Activated B cell treated with CpG ODN at 0.5 μM for 24 hours (primary cell): ENCODE measurements at regions of chr6 and their contacts with region 1.

Region 1: GRCh38 chr6:151822260-151823111 is 15.0 kb downstream of the ESR1 start:
- DNase-seq: no peak
- ATAC-seq: peak; percentile 95
- H3K4me3 Mint-ChIP-seq: peak overlapping the region; percentile 59
- H3K27ac Mint-ChIP-seq: peak overlapping the region; percentile 8
- H3K4me1 Mint-ChIP-seq: peaks cover 20% of the 10 kb centered on the region
- H3K27me3 Mint-ChIP-seq: no peaks in the 10 kb centered on the region
- CTCF ChIP-seq: no peak

Region 2: DNA sequence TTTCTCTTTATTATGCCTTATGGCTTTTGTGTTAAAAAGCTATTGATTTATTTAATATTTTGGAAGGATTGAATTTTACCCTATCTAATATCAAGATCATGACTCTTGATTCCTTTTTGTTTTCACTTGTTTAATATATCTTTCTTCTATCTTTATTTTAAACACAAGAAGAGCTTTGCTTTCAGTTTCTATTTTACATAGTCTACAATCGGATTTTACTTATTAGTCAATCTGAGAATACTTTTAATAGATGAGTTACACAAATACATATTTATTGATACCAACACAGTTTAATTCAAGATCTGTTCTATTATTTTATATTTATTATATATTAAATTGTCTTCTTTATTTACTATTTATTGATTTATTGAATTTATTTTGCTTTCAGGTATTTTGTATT is 203.8 kb after region 1 on chr6:
- CTCF ChIA-PET with region 1: no interaction called
- POLR2A ChIA-PET with region 1: no interaction called
- intact Hi-C with region 1: loop called (anchors 5 kb)
- DNase-seq: no peak
- ATAC-seq: no peak
- H3K4me3 Mint-ChIP-seq: peak overlapping the region; percentile 60
- H3K27ac Mint-ChIP-seq: no peak overlapping the region
- H3K4me1 Mint-ChIP-seq: peaks cover 5% of the 10 kb centered on the region
- H3K27me3 Mint-ChIP-seq: no peaks in the 10 kb centered on the region
- CTCF ChIP-seq: no peak